ENCODE measurements at regions of chr22 and their contacts with region 1.

Region 1: DNA sequence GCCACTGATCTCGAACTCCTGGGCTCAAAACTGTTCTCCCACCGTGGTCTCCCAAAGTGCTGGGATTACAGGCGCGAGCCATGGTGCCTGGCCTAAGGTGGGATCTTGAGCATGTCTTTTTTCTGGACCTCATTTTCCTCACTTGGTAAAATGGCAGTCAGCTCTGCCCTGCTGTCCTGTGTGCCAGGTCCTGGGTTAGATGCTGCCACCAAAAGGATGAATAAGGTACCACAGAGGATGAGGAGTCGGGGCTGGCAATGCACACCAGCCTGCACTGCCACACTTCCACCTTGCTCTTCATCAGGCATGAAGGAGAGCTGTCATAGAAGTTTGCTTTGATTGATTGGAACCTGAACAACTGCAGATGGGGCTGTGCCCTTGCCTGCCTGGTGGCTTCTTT is 32.3 kb downstream of the ACO2 start:
- DNase-seq: peak; percentile 48
- H3K4me3 Mint-ChIP-seq: no peak overlapping the region
- H3K27ac Mint-ChIP-seq: no peak overlapping the region
- H3K4me1 Mint-ChIP-seq: no peaks in the 10 kb centered on the region
- H3K27me3 Mint-ChIP-seq: no peaks in the 10 kb centered on the region

Region 2: GRCh38 chr22:41381329-41382097 is 119.7 kb before region 1 on chr22 and contains the start of gene TEF:
- CTCF ChIA-PET with region 1: no interaction called
- intact Hi-C with region 1: no loop called
- DNase-seq: peak; percentile 98
- H3K4me3 Mint-ChIP-seq: peak within 1 kb of the TSS; percentile 87
- H3K27ac Mint-ChIP-seq: peak within 1 kb of the TSS; percentile 95
- H3K4me1 Mint-ChIP-seq: peaks cover 13% of the 10 kb centered on the region
- H3K27me3 Mint-ChIP-seq: no peaks in the 10 kb centered on the region
- total RNA-seq, gene TEF: 1.7 to 1.9 TPM

Region 3: DNA sequence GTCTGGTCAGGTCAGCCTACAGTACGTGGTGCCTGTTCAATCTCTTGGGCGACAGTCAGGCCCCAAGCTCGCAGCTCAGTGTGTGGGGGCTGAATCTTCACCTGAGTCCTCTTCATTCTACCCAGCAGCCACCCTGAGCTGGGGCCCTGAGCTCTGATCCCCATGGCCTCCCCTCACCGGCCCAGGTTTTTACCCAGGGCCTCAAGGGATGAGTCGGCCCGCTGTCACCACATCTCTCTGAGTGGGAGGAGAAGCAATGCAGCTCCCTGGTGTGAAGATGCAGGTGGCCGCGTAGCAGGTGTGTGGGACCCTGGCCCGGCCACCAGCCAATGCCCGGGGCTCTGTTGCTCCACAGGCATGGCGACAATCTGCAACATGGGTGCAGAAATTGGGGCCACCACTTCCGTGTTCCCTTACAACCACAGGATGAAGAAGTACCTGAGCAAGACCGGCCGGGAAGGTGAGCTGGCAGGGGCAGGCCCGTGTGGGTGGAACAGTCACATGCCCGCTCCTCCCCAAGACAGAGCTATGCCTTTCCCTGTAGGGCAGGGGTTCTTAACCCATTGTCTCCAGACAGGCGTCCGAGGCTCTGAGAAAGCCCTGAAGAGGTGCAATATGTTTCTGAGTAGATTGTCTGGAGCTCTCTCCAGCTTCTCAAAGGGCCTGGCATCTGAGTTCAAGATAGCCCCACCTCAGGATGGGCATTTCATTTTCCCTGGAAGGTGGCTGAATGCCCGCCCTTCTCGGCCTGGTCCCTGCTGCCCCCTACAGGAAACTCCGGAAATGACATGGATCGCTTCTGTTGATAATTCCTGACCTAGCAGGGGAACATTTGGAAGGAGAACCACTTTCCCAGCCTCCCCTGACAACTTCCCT is 16.2 kb after region 1 on chr22:
- CTCF ChIA-PET with region 1: interaction called, 18 read pairs
- intact Hi-C with region 1: no loop called
- DNase-seq: peak; percentile 56
- H3K4me3 Mint-ChIP-seq: no peak overlapping the region
- H3K27ac Mint-ChIP-seq: no peak overlapping the region
- H3K4me1 Mint-ChIP-seq: peaks cover 11% of the 10 kb centered on the region
- H3K27me3 Mint-ChIP-seq: no peaks in the 10 kb centered on the region

Measured in activated naive CD4-positive, alpha-beta T cell treated with anti-CD3 and anti-CD28 coated beads for 36 hours (primary cell).